ENCODE measurements at regions of chr18 and their contacts with region 1.

Region 1: DNA sequence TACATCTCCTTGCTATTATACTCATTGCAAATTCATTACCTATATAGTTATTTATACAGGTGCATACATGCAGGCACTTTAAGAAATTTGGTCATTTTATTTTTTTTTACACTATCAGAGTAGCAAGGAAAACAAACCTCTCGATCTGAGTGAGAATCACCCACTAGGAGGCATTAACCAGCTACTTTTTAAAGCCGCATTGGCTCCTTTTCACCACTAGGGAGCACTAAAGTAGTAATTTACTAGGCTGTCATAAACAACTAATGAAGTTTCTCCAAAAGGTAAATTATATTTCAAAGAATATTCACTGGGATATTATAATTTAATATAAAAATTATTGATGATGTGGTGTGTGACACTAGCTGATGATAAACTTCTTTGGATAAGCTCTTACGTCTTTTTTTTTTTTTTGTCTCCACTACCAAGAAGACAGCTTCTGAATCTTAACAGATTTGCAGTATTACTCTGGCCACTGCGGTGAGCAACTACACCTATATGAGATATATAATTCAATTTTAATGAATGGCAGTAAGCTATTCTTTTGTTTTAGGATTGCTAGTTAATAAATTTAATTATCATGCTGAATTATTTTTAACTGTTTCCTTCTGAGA is 101.9 kb downstream of the NOL4 start:
- DNase-seq: peak in 1 of 2 donors; percentile 39
- H3K4me3 ChIP-seq: no peak overlapping the region
- H3K27ac ChIP-seq: no peak overlapping the region
- H3K4me1 ChIP-seq: no peaks in the 10 kb centered on the region
- H3K27me3 ChIP-seq: no peaks in the 10 kb centered on the region
- CTCF ChIP-seq: peak; percentile 68 to 83

Region 2: DNA sequence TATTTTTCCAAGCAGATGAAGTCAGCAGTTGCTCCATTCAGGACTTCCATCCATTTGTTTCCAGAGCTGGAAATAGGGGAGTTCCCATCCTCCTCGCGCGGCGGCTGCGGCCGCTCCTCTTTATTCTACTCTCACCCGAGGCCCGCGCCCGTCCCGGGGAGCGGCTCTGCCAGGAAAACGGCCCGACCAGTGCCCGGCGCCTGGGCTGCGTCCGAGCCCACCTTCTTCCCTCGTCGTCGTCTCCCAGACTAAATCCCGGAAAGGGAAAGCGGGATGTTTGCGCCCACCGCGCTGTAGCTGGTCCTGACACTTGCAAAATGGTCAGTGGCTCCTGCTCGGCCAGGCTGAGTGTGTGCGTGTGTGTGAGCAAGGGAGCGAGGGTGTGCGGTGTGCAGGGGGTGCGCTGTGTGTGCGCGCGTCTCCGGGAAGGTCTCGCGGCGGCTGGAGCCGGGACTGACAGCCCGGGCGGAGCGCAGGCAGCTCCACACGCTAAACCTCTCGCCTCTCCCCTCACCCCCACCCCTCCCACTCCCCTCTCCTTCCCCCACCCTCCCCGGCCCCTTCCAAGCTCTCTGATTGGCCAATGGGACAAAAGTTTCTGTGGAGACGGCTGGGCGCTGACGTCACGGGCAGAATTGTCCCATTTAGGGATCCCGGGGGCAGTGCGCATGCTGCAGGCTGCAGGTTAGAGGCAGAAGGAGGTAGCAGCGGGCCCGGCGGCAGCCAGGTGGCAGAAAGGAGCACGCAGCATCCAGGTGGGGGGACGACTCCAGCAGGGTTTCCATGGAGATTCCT is 101.8 kb after region 1 on chr18 and contains the start of gene NOL4:
- intact Hi-C with region 1: no loop called
- DNase-seq: peak in 1 of 2 donors; percentile 85
- H3K4me3 ChIP-seq: peak within 1 kb of the TSS; percentile 52 to 57
- H3K27ac ChIP-seq: peak within 1 kb of the TSS in 1 of 2 donors; percentile 45
- H3K4me1 ChIP-seq: peaks cover 0 to 38% (median 34%) of the 10 kb centered on the region in 4 donors
- H3K27me3 ChIP-seq: peaks cover 0 to 55% of the 10 kb centered on the region in 2 donors
- CTCF ChIP-seq: peak in 1 of 2 experiments; percentile 27

Region 3: DNA sequence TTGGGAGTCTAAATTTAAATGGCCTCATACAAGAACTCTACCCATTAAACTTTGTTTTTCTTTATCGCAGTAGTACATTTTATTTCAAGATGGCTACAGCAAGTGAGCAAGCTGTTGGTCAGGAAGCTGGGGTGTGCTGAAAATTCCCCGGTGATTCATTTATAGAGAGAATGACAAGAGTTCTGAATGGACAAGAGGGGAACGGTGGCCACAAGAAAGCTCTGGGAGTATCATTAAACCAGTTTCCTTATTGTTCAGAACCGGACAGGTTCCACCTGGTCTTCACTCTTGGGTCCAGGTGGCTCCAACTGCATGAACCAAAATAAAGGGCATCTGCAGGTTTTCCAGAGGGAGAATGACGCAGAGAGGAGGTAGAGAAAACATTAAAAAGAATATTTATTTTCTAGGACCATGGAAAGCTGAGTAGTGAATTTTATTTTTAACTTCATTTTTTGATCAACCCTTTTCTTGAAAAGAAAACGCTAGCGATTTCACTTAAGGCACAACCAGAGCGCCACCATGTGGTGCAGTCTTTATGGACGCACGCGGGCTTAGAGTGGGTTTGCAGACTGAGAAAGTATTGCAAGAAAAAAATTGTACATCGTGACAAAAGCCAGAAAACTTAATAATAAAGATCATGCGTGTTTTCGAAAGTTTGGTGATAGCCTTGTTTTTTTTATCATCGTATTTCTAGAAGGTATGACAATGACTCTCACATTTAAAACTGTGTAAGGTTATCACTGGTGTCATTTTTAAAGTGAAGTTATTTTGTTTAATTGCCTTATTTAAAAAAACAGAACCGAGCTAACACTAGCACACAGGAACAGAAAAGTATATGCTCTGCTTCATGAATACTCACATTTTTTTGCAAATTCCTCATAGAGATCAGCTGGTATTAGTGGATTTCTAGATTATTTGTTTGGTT is 199.8 kb after region 1 on chr18:
- intact Hi-C with region 1: loop called (anchors 10 kb)
- DNase-seq: no peak
- H3K4me3 ChIP-seq: no peak overlapping the region
- H3K27ac ChIP-seq: no peak overlapping the region
- H3K4me1 ChIP-seq: no peaks in the 10 kb centered on the region
- H3K27me3 ChIP-seq: no peaks in the 10 kb centered on the region
- CTCF ChIP-seq: peak; percentile 24 to 41